Heart left ventricle (tissue), 16 donors: ENCODE measurements at regions of chr10 and their contacts with region 1.

Region 1: GRCh38 chr10:35739998-35740397 is 97.9 kb upstream of the FZD8 start:
- DNase-seq: no peak
- ATAC-seq: no peak
- H3K4me3 ChIP-seq: no peak overlapping the region
- H3K27ac ChIP-seq: no peak overlapping the region
- H3K4me1 ChIP-seq: no peaks in the 10 kb centered on the region
- H3K27me3 ChIP-seq: no peaks in the 10 kb centered on the region
- CTCF ChIP-seq: no peak
- POLR2A ChIP-seq: no peak

Region 2: DNA sequence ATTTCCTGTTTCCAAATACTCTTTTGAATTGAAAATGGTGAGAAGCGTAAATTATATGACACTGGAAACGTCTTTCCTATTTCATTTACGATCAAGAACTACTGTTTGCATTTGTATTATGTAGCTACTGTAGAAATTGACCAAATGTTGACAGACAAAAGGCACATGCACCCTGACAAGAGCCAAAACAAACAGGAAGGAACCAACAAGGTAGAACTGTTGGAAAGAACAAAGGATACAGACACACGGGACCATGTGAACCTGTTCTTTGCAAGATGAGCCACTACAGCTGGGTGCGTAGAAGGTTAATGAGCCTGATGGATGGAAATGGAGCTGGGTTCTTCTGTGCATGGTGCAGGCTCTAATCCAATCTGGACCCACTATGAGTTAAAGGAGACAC is 49.5 kb before region 1 on chr10:
- intact Hi-C with region 1: loop called in 1 of 10 experiments (anchors 10 kb)
- DNase-seq: no peak
- ATAC-seq: no peak
- H3K4me3 ChIP-seq: no peak overlapping the region
- H3K27ac ChIP-seq: no peak overlapping the region
- H3K4me1 ChIP-seq: no peaks in the 10 kb centered on the region
- H3K27me3 ChIP-seq: no peaks in the 10 kb centered on the region
- CTCF ChIP-seq: no peak
- POLR2A ChIP-seq: no peak

Region 3: GRCh38 chr10:35822316-35822715 is 82.3 kb after region 1 on chr10:
- intact Hi-C with region 1: loop called in 1 of 10 experiments (anchors 10 kb)
- DNase-seq: peak; percentile 72 to 89 (median 88)
- ATAC-seq: peak; percentile 95 to 99 (median 98)
- H3K4me3 ChIP-seq: no peak overlapping the region
- H3K27ac ChIP-seq: peak overlapping the region in 4 of 12 donors; percentile 8 to 52 (median 24)
- H3K4me1 ChIP-seq: peaks cover 0 to 23% (median 13%) of the 10 kb centered on the region in 12 donors
- H3K27me3 ChIP-seq: no peaks in the 10 kb centered on the region
- CTCF ChIP-seq: peak in 7 of 12 donors; percentile 20 to 50 (median 38)
- POLR2A ChIP-seq: no peak